ENCODE measurements at regions of chr7 and their contacts with region 1.

Region 1: DNA sequence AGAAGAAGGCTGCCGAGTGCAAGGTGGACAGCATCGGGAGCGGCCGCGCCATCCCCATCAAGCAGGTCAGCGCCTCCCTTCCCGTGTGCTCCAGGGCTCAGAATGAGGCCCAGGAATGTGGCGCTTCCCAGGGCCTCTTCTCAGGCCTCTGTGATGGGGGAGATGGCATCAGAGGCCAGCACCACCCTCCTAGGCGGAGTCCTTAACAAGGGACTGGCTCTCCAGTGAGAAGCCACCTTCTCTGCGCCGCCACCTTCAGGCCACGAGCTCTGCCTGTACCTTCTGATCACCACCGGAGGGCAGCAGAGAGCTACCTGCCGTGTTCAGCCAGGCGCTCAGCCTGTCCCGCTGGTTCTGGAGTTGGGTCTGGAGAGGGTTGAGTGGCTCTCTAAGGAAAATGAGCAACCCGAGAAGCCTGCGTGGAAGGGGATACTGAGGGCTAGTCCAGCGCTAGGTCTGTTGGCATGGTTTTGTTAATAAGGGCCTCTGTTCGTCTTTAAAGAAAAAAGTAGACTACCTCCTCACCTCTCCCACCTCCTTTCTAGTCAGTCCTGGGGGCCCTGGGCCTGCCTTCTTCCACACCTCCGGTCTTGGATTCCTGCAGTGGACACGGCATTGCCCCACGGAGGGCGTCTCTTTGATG is 37.7 kb downstream of the AGAP3 start:
- DNase-seq: peak; percentile 88
- H3K4me3 Mint-ChIP-seq: no peak overlapping the region
- H3K27ac Mint-ChIP-seq: no peak overlapping the region
- H3K4me1 Mint-ChIP-seq: peaks cover 3% of the 10 kb centered on the region
- H3K27me3 Mint-ChIP-seq: peaks cover 12% of the 10 kb centered on the region

Region 2: GRCh38 chr7:151172273-151173141 is 48.6 kb after region 1 on chr7:
- CTCF ChIA-PET with region 1: interaction called, 19 read pairs
- DNase-seq: peak; percentile 79
- H3K4me3 Mint-ChIP-seq: no peak overlapping the region
- H3K27ac Mint-ChIP-seq: peak overlapping the region; percentile 33
- H3K4me1 Mint-ChIP-seq: peaks cover 10% of the 10 kb centered on the region
- H3K27me3 Mint-ChIP-seq: peaks cover 90% of the 10 kb centered on the region

Region 3: DNA sequence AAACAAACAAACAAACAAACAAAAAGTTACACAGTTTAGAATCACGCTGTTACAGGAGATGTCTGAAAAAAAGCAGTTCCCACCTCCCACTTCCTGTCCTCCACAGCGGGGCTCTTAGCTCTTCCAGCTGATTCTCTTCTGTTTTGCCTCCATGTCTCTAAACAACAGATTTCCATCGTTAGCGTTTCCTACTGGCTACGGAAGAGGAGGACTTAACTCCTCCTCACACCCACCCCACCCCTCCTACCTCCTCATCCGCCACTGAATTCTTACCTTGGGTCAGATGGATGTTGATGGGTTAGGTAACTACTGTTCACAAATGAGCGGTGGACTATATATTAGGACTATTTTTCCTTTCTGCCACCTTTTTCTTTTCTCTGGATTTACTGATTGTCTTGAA is 180.9 kb after region 1 on chr7:
- CTCF ChIA-PET with region 1: interaction called, 21 read pairs
- DNase-seq: no peak
- H3K4me3 Mint-ChIP-seq: peak overlapping the region; percentile 8
- H3K27ac Mint-ChIP-seq: no peak overlapping the region
- H3K4me1 Mint-ChIP-seq: peaks cover 15% of the 10 kb centered on the region
- H3K27me3 Mint-ChIP-seq: peaks cover 82% of the 10 kb centered on the region

Measured in activated naive CD4-positive, alpha-beta T cell treated with anti-CD3 and anti-CD28 coated beads, Interleukin-2, amount 10 ng/mL, durations not matched to agents 7 days and 5 days (primary cell).